Breast epithelium (tissue), 4 donors: ENCODE measurements at regions of chr9 and their contacts with region 1.

Region 1: DNA sequence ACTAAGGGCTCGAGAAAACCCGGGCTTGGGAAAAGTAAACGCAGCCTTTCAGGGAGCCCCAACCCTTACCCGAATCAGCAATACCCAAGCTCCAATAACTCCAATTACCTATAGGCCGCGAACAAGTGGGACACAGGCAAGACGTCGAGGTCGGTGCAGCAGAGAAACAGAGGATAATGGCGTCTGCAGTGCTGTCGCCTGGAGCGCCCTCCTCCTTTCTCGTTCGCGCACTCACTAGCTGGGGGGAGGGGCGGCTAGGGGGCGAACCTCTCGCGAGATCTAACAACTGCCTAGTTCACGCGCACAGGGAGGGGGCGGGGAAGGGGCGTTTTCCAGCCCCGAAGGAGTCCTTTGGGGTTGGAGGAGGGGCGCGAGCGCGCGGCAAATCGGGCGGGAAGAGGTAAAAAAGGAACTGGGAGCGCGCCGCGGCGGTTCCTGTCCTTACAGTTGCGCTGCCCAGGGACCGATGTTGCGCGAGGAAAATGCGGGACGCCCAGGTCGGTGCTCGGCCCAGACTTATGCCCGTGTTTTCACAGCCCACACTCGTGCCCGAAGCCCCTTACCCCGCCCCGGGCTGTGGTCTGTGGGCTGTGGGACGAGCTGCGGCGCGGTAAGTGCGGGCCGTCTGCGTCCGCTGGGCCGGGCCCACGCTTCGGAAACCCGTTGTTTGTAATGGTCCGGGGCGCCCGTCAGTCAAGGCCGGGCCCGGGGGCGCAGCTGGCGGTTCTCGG is at the start of gene RMI1:
- DNase-seq: peak; percentile 98 to 99
- H3K4me3 ChIP-seq: peak within 1 kb of the TSS; percentile 93 to 95 (median 95)
- H3K27ac ChIP-seq: peak within 1 kb of the TSS; percentile 100
- H3K4me1 ChIP-seq: peaks cover 0 to 13% of the 10 kb centered on the region in 2 donors
- H3K27me3 ChIP-seq: no peaks in the 10 kb centered on the region
- CTCF ChIP-seq: peak; percentile 6 to 22 (median 16)
- POLR2A ChIP-seq: peak; percentile 97
- total RNA-seq, gene RMI1: 3.7 to 6.2 (median 6.1) TPM

Region 2: GRCh38 chr9:83920927-83921707 is 59.4 kb before region 1 on chr9 and contains the start of gene KIF27:
- intact Hi-C with region 1: loop called (anchors 2 kb)
- DNase-seq: peak; percentile 99 to 100
- H3K4me3 ChIP-seq: peak within 1 kb of the TSS; percentile 83 to 99 (median 91)
- H3K27ac ChIP-seq: peak within 1 kb of the TSS; percentile 100
- H3K4me1 ChIP-seq: no peaks in the 10 kb centered on the region
- H3K27me3 ChIP-seq: no peaks in the 10 kb centered on the region
- CTCF ChIP-seq: peak in 2 of 3 donors; percentile 36 to 59
- POLR2A ChIP-seq: peak; percentile 66
- total RNA-seq, gene KIF27: 6.9 to 16.1 (median 11.5) TPM